Activated B cell treated with CpG ODN at 0.5 μM for 24 hours (primary cell): ENCODE measurements at regions of chr21 and their contacts with region 1.

Region 1: DNA sequence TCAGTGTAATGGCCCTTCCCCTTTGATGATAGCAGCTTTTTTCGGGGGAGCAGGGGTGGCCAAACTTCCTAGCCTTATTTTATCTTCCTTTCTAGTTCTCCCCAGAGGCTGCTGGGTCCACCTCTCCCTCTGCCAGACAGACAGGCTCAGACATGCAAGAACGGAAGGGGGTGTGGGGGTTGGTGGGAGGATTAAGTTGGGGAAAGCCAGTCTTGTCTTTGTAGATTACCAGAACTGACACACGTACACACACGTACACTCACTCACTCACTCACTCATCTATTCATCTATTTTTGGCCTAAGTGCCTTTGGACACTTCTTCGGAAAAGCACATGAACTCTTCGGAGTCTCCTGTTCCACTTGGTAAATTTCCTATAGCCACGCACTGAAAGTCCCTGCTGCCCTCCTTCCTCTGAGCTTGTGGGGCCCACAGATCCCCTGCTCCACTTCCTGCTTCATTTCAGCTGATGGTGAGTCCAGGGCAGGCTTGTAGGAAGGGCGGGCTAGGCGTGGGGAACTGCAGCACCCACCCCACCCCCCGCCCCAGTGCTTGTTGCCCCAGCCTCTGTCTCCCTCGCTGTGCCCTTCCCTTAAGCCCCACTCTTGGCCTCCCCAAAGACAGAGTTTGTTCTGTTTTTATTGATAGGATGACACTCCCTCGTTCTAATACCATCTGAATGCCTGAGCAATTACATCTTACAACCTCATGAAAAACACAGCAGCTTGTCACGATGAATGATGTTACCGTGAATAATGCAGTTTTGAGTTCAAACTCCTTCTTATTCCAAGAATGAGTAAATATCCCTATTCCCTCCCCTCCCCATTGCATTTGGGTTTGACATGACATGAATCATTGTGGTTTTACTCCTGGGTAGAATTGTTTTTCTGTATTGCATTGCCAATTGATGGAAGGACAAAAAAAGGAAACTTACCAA is 60.7 kb upstream of the ATP5PO start:
- DNase-seq: no peak
- ATAC-seq: peak; percentile 49
- H3K4me3 Mint-ChIP-seq: peak overlapping the region; percentile 66
- H3K27ac Mint-ChIP-seq: peak overlapping the region; percentile 90
- H3K4me1 Mint-ChIP-seq: peaks cover 36% of the 10 kb centered on the region
- H3K27me3 Mint-ChIP-seq: no peaks in the 10 kb centered on the region
- CTCF ChIP-seq: no peak

Region 2: DNA sequence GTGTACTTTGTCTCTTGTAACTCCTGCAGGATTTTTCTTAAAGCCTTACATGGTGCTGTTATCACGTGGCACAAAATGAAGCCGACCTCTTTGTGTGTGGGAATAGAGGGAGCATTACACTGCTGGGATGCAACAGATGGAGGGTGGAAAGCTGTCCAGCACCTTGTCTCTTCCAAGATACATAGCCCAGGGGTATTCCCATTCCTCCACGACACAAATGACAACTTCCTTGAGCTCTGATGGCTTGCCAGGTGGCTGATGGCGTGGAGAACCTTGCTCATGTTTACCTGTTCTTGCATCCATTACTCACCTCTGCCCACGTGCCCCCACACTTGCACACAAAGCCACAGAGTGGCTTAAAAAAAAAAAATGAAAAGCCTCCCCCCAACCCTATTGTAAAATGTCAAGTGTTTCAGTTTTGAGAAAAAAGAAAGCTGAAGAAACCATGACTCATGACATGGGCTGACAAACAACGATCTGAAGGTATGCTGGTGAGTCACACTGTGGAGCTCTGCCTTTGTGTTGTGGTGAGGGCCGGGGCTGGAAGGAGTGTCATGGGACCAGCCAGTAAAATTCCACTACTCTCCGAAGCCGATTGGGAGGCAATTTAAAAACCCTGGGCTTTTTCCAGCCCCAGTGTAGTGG is 28.8 kb before region 1 on chr21:
- CTCF ChIA-PET with region 1: interaction called, 4 read pairs
- POLR2A ChIA-PET with region 1: interaction called, 15 read pairs
- intact Hi-C with region 1: loop called (anchors 1 kb)
- DNase-seq: peak; percentile 36
- ATAC-seq: peak; percentile 74
- H3K4me3 Mint-ChIP-seq: peak overlapping the region; percentile 75
- H3K27ac Mint-ChIP-seq: peak overlapping the region; percentile 92
- H3K4me1 Mint-ChIP-seq: peaks cover 55% of the 10 kb centered on the region
- H3K27me3 Mint-ChIP-seq: no peaks in the 10 kb centered on the region
- CTCF ChIP-seq: no peak

Region 3: GRCh38 chr21:33993286-33994231 is 17.2 kb after region 1 on chr21:
- CTCF ChIA-PET with region 1: no interaction called
- POLR2A ChIA-PET with region 1: interaction called, 4 read pairs
- intact Hi-C with region 1: loop called (anchors 2 kb)
- DNase-seq: no peak
- ATAC-seq: peak; percentile 97
- H3K4me3 Mint-ChIP-seq: peak overlapping the region; percentile 38
- H3K27ac Mint-ChIP-seq: peak overlapping the region; percentile 65
- H3K4me1 Mint-ChIP-seq: peaks cover 15% of the 10 kb centered on the region
- H3K27me3 Mint-ChIP-seq: peaks cover 2% of the 10 kb centered on the region
- CTCF ChIP-seq: no peak

Region 4: DNA sequence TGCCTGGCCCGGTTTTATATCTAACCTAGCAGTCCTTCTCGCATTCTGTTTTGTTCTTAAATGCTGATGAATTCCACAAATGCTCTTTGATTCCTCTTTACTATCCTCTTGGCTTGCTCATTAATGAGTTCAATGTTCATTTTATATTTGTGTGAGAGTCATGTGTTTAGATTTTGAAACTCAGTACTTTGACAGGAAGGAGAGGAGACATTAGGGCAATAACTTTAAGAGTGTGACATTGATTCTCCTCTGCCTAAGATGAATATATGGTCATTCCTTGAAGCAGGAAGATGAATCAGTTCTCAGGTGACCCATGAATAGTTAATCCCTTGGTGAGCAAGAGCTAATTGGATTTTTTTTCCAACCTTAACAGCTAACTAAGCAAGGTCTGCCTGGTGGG is 181.2 kb after region 1 on chr21:
- CTCF ChIA-PET with region 1: no interaction called
- POLR2A ChIA-PET with region 1: no interaction called
- intact Hi-C with region 1: no loop called
- DNase-seq: no peak
- ATAC-seq: no peak
- H3K4me3 Mint-ChIP-seq: no peak overlapping the region
- H3K27ac Mint-ChIP-seq: no peak overlapping the region
- H3K4me1 Mint-ChIP-seq: peaks cover 2% of the 10 kb centered on the region
- H3K27me3 Mint-ChIP-seq: no peaks in the 10 kb centered on the region
- CTCF ChIP-seq: no peak